AG04450 (cell line): ENCODE measurements at regions of chr15 and their contacts with region 1.

Region 1: DNA sequence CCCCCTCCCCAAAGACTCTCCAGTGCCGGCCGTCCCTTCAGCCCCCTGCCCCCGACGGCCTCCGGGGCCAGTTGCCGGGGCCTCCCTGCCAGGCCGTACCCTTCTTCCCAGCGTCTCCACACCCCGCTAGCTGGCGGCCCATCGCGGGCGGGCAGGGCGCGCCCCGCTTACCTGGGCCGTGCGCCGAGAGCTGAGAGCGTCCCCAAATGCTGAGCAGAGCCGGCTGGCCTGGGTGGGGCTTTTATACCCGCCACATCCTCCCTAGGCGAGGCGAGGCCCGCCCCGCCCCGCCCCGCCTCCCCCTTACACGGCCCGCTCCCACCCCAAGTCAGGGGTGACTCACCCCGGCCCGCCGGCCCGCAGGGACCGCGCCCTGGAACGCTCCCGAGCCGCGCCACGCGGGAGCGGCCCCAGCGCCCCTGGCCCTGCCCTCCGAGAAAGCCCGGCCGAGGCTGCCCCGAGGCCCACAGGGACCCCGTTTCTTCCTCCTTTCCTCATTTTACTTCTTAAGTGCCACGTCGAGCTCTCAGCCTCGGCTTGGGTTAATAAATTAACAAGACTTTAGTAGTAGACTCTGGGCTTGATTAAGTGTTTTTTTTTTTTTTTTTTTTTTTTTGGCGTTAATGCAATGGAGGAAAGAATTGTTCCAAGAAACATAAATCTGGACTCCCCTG is at the start of gene ANXA2:
- DNase-seq: no peak
- H3K4me3 ChIP-seq: peak within 1 kb of the TSS; percentile 96
- H3K27ac ChIP-seq: peak within 1 kb of the TSS; percentile 97
- H3K27me3 ChIP-seq: no peaks in the 10 kb centered on the region
- CTCF ChIP-seq: no peak
- polyA plus RNA-seq, gene ANXA2: 4,288 and 4,537 TPM in 2 replicates

Region 2: GRCh38 chr15:59993950-59994401 is 403.9 kb before region 1 on chr15:
- CTCF ChIA-PET with region 1: no interaction called
- POLR2A ChIA-PET with region 1: no interaction called
- DNase-seq: no peak
- H3K4me3 ChIP-seq: no peak overlapping the region
- H3K27ac ChIP-seq: no peak overlapping the region
- H3K27me3 ChIP-seq: peaks cover 67% of the 10 kb centered on the region
- CTCF ChIP-seq: no peak

Region 3: DNA sequence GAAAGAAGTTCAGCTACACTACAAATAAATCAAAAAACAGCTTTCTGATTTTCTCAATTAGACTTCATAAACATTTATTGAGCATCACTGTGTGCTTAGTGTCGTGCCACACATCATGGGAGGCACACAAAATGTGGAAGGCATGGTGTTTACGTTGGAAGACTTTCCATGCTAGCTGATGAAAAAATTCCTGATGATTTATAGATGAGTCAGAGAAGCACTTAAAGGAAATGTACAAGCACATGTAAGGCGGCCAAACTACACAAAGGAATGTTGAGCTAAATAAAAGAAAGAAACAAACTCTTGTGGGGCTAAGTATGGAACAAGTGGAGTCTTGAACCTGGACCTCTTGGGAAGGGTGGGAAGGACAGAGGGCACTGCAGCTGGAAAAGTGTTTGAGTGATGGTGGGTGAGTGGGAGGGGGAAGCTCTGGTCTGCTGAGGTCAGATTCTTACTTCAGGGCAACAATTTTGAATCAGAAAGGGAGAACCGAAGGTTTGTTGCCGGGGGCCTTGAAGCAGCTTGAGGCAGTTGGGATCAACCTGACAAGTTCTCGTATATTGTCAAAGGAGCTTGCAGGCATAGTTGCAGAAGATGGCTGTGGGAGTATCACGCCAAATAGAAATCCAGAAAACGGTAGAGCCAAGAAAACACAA is 326.9 kb before region 1 on chr15:
- CTCF ChIA-PET with region 1: no interaction called
- POLR2A ChIA-PET with region 1: interaction called, 10 read pairs
- DNase-seq: peak; percentile 55
- H3K4me3 ChIP-seq: no peak overlapping the region
- H3K27ac ChIP-seq: peak overlapping the region; percentile 58
- H3K27me3 ChIP-seq: no peaks in the 10 kb centered on the region
- CTCF ChIP-seq: no peak

Region 4: GRCh38 chr15:60374628-60375081 is 23.3 kb before region 1 on chr15:
- CTCF ChIA-PET with region 1: no interaction called
- POLR2A ChIA-PET with region 1: interaction called, 24 read pairs
- DNase-seq: peak; percentile 93
- H3K4me3 ChIP-seq: no peak overlapping the region
- H3K27ac ChIP-seq: peak overlapping the region; percentile 97
- H3K27me3 ChIP-seq: no peaks in the 10 kb centered on the region
- CTCF ChIP-seq: no peak

Region 5: GRCh38 chr15:60379525-60380274 is 18.2 kb before region 1 on chr15:
- CTCF ChIA-PET with region 1: no interaction called
- POLR2A ChIA-PET with region 1: interaction called, 24 read pairs
- DNase-seq: peak; percentile 92
- H3K4me3 ChIP-seq: no peak overlapping the region
- H3K27ac ChIP-seq: peak overlapping the region; percentile 98
- H3K27me3 ChIP-seq: no peaks in the 10 kb centered on the region
- CTCF ChIP-seq: no peak